GM12878 (cell line): ENCODE measurements at regions of chr11 and their contacts with region 1.

Region 1: DNA sequence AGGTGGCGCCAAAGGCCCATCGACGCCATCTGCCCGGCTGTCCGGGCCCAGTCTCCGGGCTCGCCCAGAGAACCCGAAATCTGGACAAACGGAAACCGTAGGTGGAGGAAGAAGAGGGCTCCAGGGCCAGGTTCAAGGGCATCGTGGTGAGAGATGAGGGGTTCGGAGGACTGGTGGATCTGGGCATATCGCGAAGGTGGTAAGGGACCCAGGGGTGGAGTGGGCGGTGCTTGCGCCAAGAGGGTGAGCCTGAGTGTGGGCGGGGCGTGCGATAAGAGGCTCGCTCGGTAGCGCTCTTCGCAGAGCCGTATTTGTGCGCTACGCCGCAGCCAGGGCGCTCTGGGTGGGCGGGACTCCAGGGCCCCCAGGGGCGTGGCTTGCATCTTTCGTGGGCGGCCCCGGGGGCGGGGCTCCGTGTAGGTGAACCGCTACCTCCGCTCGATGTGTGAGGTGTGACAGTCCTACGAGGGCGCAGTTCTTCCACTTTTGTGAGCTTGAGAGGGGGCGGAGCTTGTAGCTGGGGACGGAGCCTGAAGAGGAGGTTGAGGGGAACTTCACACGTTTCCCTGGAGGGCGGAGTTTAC is 4.8 kb downstream of the CD248 start:
- DNase-seq: peak; percentile 78
- ATAC-seq: peak; percentile 93
- H3K4me3 ChIP-seq: peak overlapping the region; percentile 66
- H3K27ac ChIP-seq: peak overlapping the region; percentile 55; the same call in 1 of the 2 replicates
- H3K4me1 ChIP-seq: no peaks in the 10 kb centered on the region; the same call in 1 of the 2 replicates
- H3K27me3 ChIP-seq: no peaks in the 10 kb centered on the region; a peak in 1 of 4 replicates
- CTCF ChIP-seq: peak in 2 of 3 experiments; percentile 91 to 94; a peak in 4 of 6 replicates
- EP300 ChIP-seq: no peak
- POLR2A ChIP-seq: peak; percentile 56; the same call in 1 of the 2 replicates
- RAD21 ChIP-seq: peak; percentile 94

Region 2: DNA sequence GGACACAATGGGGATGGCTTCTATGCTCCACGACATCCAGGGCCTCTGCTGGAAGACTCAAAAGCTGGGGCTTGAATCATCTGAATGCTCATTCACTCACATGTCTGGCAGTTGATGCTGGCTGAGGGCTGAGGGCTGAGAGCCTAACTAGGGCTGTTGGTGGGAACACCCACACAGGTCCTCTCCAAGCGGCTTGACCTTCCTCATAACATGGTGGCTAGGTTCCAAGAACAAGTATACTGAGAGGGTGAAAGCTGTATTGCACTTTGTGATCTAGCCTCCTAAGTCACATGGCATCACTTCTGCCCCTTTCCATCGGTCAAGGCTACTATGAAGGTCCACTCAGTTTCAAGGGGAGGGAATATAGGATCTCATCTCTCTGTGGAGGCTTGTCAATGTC is 12.9 kb before region 1 on chr11:
- CTCF ChIA-PET with region 1: interaction called, 25 read pairs
- POLR2A ChIA-PET with region 1: no interaction called
- RAD21 ChIA-PET with region 1: interaction called, 6 read pairs
- SMC1A ChIA-PET with region 1: interaction called, 8 read pairs
- in situ Hi-C with region 1: no loop called
- intact Hi-C with region 1: no loop called
- DNase-seq: no peak
- ATAC-seq: no peak
- H3K4me3 ChIP-seq: no peak overlapping the region
- H3K27ac ChIP-seq: no peak overlapping the region
- H3K4me1 ChIP-seq: no peaks in the 10 kb centered on the region
- H3K27me3 ChIP-seq: peaks cover 0 to 2% of the 10 kb centered on the region in 2 experiments; a peak in 1 of 4 replicates
- CTCF ChIP-seq: no peak
- EP300 ChIP-seq: no peak
- POLR2A ChIP-seq: no peak
- RAD21 ChIP-seq: no peak

Region 3: DNA sequence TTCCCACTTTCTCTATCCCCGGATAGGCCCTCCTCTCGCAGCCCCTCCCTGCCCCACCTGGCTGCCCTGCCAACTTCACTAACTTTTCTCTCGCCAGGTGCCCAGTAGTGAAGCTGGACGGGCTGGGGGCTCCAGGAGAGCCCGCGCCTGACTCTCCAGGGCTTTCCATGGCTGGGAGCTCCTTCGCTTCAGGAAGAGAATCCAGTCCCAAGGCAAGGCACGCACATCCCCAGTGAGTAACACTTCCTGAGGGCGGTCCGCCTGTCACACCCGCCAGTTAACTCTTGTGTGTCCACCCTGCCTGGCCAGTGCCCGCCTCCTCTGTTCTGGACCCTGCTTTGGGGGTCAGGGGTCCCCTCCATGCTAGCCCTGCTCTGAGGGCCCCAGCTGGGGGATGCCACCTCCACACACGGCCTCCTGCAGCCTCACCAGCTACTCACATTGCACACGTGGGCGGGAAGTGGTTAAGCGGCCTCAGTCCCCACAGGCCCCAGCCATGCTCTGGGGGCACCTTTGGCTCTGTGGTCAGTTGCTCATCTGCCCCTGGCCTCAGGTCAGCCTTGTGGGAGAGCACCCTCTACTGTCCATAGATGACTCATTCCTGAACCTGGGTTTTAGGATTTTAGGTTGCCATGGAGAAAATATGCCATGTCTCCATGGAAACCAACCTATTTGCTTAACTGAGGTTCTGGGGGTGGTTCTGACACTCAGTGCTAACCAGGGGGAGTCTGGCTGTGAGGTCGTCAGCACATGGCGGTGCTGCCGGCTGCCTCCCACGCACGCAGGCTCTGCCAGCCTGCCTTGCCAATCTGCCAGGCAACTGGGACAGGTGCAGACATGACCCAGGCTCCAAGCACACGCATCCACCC is 24.4 kb after region 1 on chr11 and contains the start of gene RIN1:
- CTCF ChIA-PET with region 1: interaction called, 96 read pairs
- POLR2A ChIA-PET with region 1: interaction called, 15 read pairs
- RAD21 ChIA-PET with region 1: interaction called, 49 read pairs
- SMC1A ChIA-PET with region 1: interaction called, 33 read pairs
- in situ Hi-C with region 1: no loop called
- intact Hi-C with region 1: no loop called
- DNase-seq: peak; percentile 83
- ATAC-seq: peak; percentile 94
- H3K4me3 ChIP-seq: no peak within 1 kb of the TSS
- H3K27ac ChIP-seq: no peak within 1 kb of the TSS
- H3K4me1 ChIP-seq: peaks cover 21% of the 10 kb centered on the region
- H3K27me3 ChIP-seq: no peaks in the 10 kb centered on the region
- CTCF ChIP-seq: peak; percentile 23 to 57 (median 30); a peak in 4 of 6 replicates
- EP300 ChIP-seq: peak; percentile 57 to 64; a peak in 3 of 4 replicates
- POLR2A ChIP-seq: peak; percentile 41
- RAD21 ChIP-seq: peak; percentile 46
- polyA plus RNA-seq, gene RIN1: 0.04 TPM in 1 of 2 experiments, not detected in the other

Region 4: GRCh38 chr11:66371627-66372415 is 59.8 kb after region 1 on chr11 and contains the start of gene SLC29A2:
- CTCF ChIA-PET with region 1: interaction called, 17 read pairs
- POLR2A ChIA-PET with region 1: interaction called, 9 read pairs
- RAD21 ChIA-PET with region 1: interaction called, 18 read pairs
- SMC1A ChIA-PET with region 1: interaction called, 5 read pairs
- in situ Hi-C with region 1: no loop called
- intact Hi-C with region 1: no loop called
- DNase-seq: peak; percentile 61
- ATAC-seq: peak; percentile 91
- H3K4me3 ChIP-seq: peak within 1 kb of the TSS; percentile 90
- H3K27ac ChIP-seq: peak within 1 kb of the TSS; percentile 69
- H3K4me1 ChIP-seq: peaks cover 4% of the 10 kb centered on the region; the same call in 1 of the 2 replicates
- H3K27me3 ChIP-seq: no peaks in the 10 kb centered on the region; a peak in 1 of 4 replicates
- CTCF ChIP-seq: no peak
- EP300 ChIP-seq: no peak
- POLR2A ChIP-seq: no peak; the same call in none of the 2 replicates
- RAD21 ChIP-seq: no peak
- polyA plus RNA-seq, gene SLC29A2: 0.27 to 0.44 TPM

Region 5: DNA sequence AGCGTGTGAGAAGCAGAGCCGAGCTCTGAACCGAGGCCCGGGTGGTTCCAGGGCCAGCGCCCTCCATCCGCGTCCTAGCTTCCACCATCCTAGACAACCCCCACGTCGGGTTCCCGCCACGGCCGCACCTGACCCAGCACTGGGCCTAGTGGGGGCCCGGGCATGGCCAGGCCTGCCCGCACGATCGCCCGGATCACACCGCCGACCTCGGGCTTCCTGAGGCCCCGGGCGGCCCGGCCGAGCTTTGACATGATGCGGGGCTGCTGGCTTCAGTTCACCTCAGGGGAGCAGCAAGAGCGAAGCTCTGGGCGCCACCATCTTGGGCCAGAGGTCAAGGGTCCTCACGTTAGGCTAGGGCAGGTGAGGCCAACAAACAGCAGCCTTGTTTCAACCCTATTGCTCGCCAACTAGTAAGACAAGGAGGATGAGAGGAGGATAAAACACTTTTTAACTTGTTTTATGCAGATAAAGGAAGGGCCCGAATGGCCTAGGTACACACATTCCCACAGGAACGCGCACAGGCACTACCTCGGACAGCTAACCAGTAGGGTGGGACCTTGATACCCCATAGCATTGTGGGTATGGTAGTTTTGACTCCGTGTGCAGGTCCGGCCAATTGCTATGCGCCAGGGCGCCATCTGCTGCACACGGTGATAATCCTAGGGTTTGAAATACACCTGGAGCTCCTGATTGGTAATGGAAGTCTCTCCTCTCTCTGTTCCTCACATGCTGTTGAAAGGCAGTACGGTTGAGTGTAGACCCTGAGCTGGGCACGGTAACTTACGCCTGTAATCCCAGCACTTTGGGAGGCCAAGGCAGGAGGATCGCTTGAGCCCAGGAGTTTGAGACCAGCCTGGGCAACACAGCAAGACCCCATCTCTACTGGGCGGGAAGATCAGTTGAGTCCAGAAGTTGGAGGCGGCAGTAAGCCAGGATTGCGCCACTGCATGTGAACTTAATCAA is 126.7 kb after region 1 on chr11 and contains the start of gene MRPL11:
- CTCF ChIA-PET with region 1: interaction called, 5 read pairs
- POLR2A ChIA-PET with region 1: interaction called, 3 read pairs
- RAD21 ChIA-PET with region 1: interaction called, 12 read pairs
- SMC1A ChIA-PET with region 1: interaction called, 3 read pairs
- in situ Hi-C with region 1: no loop called
- intact Hi-C with region 1: no loop called
- DNase-seq: peak; percentile 95
- ATAC-seq: peak; percentile 99
- H3K4me3 ChIP-seq: peak within 1 kb of the TSS; percentile 98
- H3K27ac ChIP-seq: peak within 1 kb of the TSS; percentile 85
- H3K4me1 ChIP-seq: no peaks in the 10 kb centered on the region
- H3K27me3 ChIP-seq: no peaks in the 10 kb centered on the region; a peak in 1 of 4 replicates
- CTCF ChIP-seq: peak; percentile 66 to 91 (median 87)
- EP300 ChIP-seq: no peak
- POLR2A ChIP-seq: peak; percentile 82
- RAD21 ChIP-seq: peak; percentile 37; the same call in 1 of the 2 replicates
- polyA plus RNA-seq, gene MRPL11: 43.5 to 80.9 TPM

Region 6: GRCh38 chr11:66579017-66579606 is 267.1 kb after region 1 on chr11:
- CTCF ChIA-PET with region 1: no interaction called
- POLR2A ChIA-PET with region 1: no interaction called
- RAD21 ChIA-PET with region 1: no interaction called
- SMC1A ChIA-PET with region 1: no interaction called
- in situ Hi-C with region 1: no loop called
- intact Hi-C with region 1: no loop called
- DNase-seq: no peak
- ATAC-seq: peak; percentile 91
- H3K4me3 ChIP-seq: no peak overlapping the region
- H3K27ac ChIP-seq: no peak overlapping the region
- H3K4me1 ChIP-seq: no peaks in the 10 kb centered on the region; the same call in 1 of the 2 replicates
- H3K27me3 ChIP-seq: no peaks in the 10 kb centered on the region
- CTCF ChIP-seq: peak; percentile 77 to 78 (median 77)
- EP300 ChIP-seq: no peak
- POLR2A ChIP-seq: no peak
- RAD21 ChIP-seq: peak; percentile 69